A549 (cell line): ENCODE measurements at regions of chr14 and their contacts with region 1.

Region 1: GRCh38 chr14:104708606-104709268 is 15.3 kb upstream of the ADSS1 start:
- DNase-seq: peak; percentile 81 to 91
- ATAC-seq: peak; percentile 55 to 79
- H3K4me3 ChIP-seq: no peak overlapping the region
- H3K27ac ChIP-seq: peak overlapping the region in 1 of 2 experiments; percentile 81; a peak in 3 of 6 replicates
- H3K4me1 ChIP-seq: peaks cover 32% of the 10 kb centered on the region
- CTCF ChIP-seq: peak; percentile 84
- EP300 ChIP-seq: no peak
- POLR2A ChIP-seq: no peak
- RAD21 ChIP-seq: peak; percentile 84 to 85

Region 2: GRCh38 chr14:104650057-104650981 is 58.4 kb before region 1 on chr14:
- CTCF ChIA-PET with region 1: interaction called, 15 read pairs
- POLR2A ChIA-PET with region 1: no interaction called
- DNase-seq: peak; percentile 53 to 82
- ATAC-seq: peak; percentile 88 to 95
- H3K4me3 ChIP-seq: peak overlapping the region; percentile 33
- H3K27ac ChIP-seq: peak overlapping the region; percentile 66 to 86
- H3K4me1 ChIP-seq: peaks cover 5% of the 10 kb centered on the region; the same call in 2 of the 3 replicates
- CTCF ChIP-seq: peak; percentile 98
- EP300 ChIP-seq: no peak
- POLR2A ChIP-seq: no peak
- RAD21 ChIP-seq: peak; percentile 87 to 97

Region 3: DNA sequence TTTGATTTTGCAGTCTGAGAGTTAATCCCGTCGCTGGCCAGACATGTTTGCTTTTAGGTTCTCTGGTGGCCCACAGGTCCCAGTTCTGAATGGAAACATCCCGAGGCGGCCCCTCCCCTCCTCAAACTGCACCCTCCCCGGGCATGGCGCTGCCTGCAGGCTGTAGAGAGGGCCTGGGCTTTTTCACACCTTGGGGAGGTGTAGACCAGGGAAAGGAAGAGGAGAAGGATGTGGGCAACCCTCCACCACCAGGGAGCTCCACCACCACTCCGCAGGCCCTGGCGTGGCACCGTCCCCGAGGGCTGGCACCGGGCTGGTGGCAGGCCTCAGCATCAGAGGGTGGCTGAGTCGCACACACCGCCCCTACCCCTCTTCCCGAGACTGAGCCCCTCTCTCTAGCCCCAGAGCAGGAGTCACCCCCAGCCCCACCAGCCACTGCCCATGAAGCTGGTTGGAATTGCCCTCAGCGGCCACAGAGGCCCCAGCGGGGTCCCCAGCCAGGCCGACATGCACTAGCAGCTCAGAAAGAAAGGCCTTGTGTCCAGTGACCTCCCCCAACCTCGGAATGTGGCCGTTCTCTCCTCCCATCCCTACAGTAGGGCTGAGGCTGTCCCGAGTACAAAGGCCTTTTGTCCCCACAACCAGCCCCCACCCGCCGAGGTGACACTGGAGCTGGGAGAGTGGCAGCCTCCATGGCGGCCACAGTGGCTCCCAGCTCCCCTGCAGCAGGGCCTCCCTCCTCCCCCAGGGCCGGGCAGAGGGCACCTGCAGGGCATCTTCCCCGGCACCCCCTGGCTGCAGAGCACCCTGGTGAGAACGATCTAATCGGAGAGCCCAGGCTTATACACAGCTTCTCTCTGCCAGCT is 42.8 kb before region 1 on chr14:
- CTCF ChIA-PET with region 1: interaction called, 110 read pairs
- POLR2A ChIA-PET with region 1: no interaction called
- DNase-seq: peak; percentile 77 to 86
- ATAC-seq: peak; percentile 94 to 95
- H3K4me3 ChIP-seq: no peak overlapping the region
- H3K27ac ChIP-seq: peak overlapping the region; percentile 70 to 85
- H3K4me1 ChIP-seq: peaks cover 22% of the 10 kb centered on the region
- CTCF ChIP-seq: peak; percentile 54
- EP300 ChIP-seq: no peak
- POLR2A ChIP-seq: no peak
- RAD21 ChIP-seq: peak; percentile 59 to 61

Region 4: DNA sequence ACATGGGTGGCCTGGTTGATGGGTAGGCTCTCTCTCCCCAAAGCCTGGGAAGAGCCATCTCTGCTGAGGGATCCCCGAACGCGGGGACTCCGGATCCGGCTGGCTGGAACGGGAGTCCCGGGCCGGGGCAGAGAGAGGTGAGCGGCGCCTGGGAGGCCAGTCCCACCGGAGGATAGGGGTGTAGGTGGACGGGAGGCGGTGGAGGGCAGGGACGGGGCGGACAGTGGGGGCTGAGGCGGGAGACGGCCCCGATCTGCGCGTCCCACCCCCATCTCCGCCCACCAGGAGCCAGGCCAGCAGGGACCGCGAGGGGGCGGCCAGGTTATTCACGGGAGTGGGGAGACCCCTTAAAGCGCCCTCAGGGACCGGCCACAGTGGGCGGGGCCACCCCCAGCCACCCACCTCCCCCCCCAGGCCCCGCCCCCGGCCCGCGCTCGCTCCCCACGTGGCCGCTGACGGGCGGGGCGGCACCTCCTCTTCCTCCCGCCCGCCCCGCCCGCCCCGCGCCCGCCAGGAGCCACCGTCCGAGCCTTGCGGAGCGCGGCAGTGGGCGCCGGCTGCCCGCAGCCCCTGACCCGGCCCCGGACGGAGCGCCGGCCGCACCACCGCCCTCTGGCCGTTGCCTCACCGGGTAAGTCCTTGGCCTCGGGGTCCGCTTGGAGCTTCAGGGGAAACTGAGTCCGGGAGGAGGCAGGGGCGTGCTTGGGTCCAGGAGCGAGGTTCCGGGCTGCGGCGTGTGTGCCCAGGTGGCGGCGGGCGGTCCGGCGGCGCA is 19.4 kb before region 1 on chr14 and contains the start of gene INF2:
- CTCF ChIA-PET with region 1: interaction called, 143 read pairs
- POLR2A ChIA-PET with region 1: no interaction called
- DNase-seq: peak; percentile 84 to 87
- ATAC-seq: peak; percentile 64 to 71
- H3K4me3 ChIP-seq: peak within 1 kb of the TSS; percentile 99
- H3K27ac ChIP-seq: peak within 1 kb of the TSS; percentile 98
- H3K4me1 ChIP-seq: peaks cover 73% of the 10 kb centered on the region
- CTCF ChIP-seq: peak; percentile 26; the same call in 1 of the 3 replicates
- EP300 ChIP-seq: no peak
- POLR2A ChIP-seq: peak; percentile 56
- RAD21 ChIP-seq: peak; percentile 8 to 40; a peak in 4 of 5 replicates
- polyA plus RNA-seq, gene INF2: 23.6 and 24.7 TPM in 2 replicates

Region 5: DNA sequence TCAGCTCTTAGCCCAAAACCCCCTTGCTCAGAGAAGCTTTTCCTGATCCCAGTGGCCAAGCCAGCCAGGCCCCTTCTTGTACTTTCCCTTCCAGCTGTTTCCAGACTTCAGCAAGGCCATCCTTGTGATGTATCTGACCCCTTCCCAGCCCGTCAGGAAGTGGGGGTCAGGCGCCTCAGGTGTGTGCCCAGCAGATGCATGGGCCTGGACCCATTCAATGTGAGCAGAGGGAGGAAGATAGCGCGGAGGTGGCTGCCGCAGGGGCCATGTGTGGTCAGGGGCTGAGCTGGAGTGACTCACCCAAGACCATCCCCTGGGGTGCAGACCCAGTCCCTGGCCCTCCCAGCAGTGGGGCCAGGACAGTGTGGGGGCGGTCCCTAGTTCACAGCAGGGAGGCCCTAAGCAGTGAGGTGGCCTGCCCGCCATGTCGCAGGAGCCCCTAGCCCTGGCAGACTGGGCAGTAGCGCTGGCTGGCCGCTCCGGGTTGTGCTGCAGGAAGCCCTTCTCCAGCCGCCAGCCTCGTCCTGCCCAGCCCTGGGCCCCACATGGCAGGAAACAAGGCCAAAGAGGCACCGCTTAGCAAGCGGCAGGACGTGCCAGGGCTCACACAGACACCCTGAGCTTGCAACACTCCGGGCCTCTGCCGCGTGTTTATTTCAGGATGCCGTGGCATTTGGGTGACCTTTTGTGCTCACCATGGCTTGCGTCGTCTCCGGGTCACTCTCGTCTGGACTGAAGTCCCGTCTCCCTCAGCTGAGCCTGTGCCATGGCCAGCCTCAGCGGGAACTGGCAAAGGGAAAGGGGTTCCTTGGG is 27.3 kb after region 1 on chr14:
- CTCF ChIA-PET with region 1: interaction called, 11 read pairs
- POLR2A ChIA-PET with region 1: no interaction called
- DNase-seq: no peak
- ATAC-seq: no peak
- H3K4me3 ChIP-seq: no peak overlapping the region
- H3K27ac ChIP-seq: peak overlapping the region in 1 of 2 experiments; percentile 39; a peak in 2 of 6 replicates
- H3K4me1 ChIP-seq: peaks cover 43% of the 10 kb centered on the region
- CTCF ChIP-seq: no peak
- EP300 ChIP-seq: no peak
- POLR2A ChIP-seq: no peak
- RAD21 ChIP-seq: no peak